Activated T-helper 2 cell treated with anti-CD3 and anti-CD28 coated beads, Interferon-gamma antibody, Interleukin-2, Interleukin-4, amounts not matched to agents 10 μg/mL and 5 μg/mL and 100 μg/mL, durations not matched to agents 14 hours and 24 hours and 36 hours (primary cell): ENCODE measurements at regions of chrX and their contacts with region 1.

Region 1: DNA sequence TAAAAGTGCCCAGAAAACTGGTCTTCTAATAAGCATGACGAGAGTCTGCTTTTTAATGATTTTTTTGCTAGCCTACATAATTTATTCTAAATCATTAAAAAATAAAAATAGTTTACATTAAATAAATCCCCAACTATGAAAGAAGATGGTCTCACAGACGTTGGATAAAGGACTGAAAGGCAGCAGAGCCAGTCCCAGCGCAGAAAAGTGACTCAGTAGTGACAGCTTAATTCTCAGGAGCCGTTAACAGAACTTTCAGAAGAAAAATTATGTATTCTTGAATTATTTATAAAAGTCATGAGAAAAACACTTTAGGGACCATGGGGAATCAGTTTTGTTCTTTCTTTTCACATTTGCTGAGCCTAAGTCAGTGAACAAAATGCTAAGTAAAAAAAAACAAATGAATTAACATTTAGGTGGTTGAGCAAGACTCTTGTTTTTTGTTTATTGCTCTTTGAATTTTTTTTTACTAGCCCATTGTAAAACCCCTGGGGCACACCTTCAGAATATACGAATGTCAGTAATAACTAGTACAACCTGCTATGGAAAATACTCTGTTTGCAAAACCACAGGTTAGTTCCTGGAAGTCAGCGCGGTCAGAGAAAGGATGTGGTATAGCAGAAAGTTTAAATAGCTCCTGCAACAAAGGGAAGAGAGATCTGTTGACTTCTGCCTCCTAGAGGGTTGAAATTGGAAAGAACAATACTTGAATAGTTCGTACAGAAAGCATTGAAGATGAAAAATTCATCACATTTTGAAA is 50.4 kb upstream of the CCDC160 start:
- DNase-seq: peak; percentile 65
- H3K4me3 Mint-ChIP-seq: peak overlapping the region; percentile 95
- H3K27ac Mint-ChIP-seq: peak overlapping the region; percentile 96
- H3K4me1 Mint-ChIP-seq: peaks cover 41% of the 10 kb centered on the region
- H3K27me3 Mint-ChIP-seq: no peaks in the 10 kb centered on the region

Region 2: GRCh38 chrX:134013092-134013497 is 173.4 kb before region 1 on chrX:
- intact Hi-C with region 1: loop called (anchors 5 kb)
- DNase-seq: no peak
- H3K4me3 Mint-ChIP-seq: no peak overlapping the region
- H3K27ac Mint-ChIP-seq: no peak overlapping the region
- H3K4me1 Mint-ChIP-seq: peaks cover 12% of the 10 kb centered on the region
- H3K27me3 Mint-ChIP-seq: peaks cover 2% of the 10 kb centered on the region

Region 3: DNA sequence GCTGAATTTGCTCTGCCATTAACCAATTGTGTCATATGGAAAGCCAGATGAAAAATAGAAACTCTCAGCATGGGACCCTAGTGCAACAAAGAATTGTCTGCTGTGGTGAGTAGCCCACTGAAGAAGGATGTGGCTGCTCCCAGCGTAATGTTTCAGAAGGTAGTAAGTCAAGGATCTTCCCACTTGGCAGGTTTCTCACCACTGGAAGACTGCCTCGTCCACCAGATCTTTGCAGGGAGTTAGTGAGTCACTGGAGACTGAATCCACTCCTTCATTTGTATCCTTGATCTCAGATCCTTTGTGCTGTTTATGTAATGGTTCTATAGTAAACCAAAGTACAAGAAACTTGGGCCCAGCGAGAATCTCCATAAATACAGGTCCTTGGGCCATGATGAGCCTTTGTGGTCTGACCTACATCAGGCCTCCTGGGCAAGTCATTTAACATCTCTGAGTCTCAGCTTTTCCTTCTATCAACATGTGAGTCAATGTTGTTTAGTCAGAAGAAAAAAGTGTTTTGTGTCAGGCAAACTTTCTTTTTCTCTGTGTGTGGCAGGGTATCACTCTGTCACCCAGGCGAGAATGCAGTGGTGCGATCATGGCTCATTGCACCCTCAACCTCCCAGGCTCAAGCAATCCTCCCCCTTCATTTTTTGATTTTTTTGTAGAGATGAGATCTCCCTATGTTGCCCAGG is 27.6 kb before region 1 on chrX:
- intact Hi-C with region 1: loop called (anchors 1 kb)
- DNase-seq: no peak
- H3K4me3 Mint-ChIP-seq: no peak overlapping the region
- H3K27ac Mint-ChIP-seq: peak overlapping the region; percentile 69
- H3K4me1 Mint-ChIP-seq: peaks cover 32% of the 10 kb centered on the region
- H3K27me3 Mint-ChIP-seq: no peaks in the 10 kb centered on the region

Region 4: DNA sequence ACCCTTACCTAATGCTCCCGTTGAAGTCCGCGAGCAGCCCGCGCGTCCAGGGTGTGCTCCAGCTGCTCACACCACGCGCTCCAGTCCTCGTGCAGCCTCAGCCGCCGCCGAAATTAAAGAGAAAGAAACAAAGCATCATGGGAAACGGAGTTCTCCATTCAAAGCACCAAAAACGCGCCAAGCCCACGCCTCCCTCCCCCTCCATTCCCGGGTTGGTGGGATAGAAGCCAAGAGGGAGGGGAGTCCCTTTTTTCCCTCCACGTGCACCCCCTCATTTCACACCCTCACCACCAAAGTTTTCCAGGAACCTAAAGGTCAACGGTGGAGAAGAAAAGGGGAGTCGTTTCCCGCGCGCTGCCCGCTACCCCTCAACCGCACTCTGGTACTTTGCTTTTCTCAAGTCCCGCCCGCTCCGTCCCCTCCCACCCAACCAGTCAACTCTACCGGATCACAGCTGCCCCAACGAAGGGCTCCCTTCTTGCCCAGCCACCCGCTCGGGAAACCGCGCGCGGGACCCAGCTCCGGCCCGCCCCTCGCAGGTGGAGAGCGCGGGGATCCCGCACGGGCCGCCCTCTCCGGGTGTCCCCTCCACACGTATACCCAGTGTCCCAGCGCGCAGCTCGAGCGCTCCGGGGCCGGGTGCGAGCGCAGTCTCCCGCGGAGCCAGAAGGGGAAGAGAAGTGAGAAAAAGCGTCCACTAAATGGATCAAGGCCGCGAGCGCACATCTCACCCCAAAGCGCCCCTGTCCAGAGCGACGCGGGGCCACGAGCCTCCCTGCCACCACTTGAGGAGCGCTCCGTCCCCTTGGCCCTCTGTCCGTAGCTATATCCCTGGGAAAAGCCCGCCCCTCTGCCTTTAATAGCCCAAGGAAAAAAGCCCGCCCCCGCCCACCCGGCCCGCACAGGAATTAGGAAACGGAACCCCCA is 14.6 kb before region 1 on chrX:
- intact Hi-C with region 1: loop called (anchors 1 kb)
- DNase-seq: peak; percentile 42
- H3K4me3 Mint-ChIP-seq: peak overlapping the region; percentile 96
- H3K27ac Mint-ChIP-seq: peak overlapping the region; percentile 97
- H3K4me1 Mint-ChIP-seq: peaks cover 31% of the 10 kb centered on the region
- H3K27me3 Mint-ChIP-seq: peaks cover 2% of the 10 kb centered on the region

Region 5: GRCh38 chrX:134251241-134251640 is 64.7 kb after region 1 on chrX:
- intact Hi-C with region 1: loop called (anchors 5 kb)
- DNase-seq: no peak
- H3K4me3 Mint-ChIP-seq: no peak overlapping the region
- H3K27ac Mint-ChIP-seq: no peak overlapping the region
- H3K4me1 Mint-ChIP-seq: peaks cover 2% of the 10 kb centered on the region
- H3K27me3 Mint-ChIP-seq: peaks cover under 1% of the 10 kb centered on the region

Region 6: DNA sequence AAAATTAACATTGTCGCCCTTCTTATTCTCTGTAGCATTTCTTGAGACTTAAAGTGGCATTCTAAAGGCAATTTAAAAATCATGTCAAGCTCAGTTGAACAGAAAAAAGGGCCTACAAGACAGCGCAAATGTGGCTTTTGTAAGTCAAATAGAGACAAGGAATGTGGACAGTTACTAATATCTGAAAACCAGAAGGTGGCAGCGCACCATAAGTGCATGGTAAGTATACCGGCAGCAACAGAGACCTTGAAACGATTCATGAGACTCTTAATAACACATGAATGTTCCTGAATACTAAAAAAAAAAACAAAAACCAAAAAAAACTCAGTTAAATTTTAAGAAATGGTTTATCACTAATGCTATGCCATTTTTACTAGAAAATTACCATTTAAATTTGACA is 191.0 kb after region 1 on chrX:
- intact Hi-C with region 1: loop called (anchors 1 kb)
- DNase-seq: no peak
- H3K4me3 Mint-ChIP-seq: no peak overlapping the region
- H3K27ac Mint-ChIP-seq: no peak overlapping the region
- H3K4me1 Mint-ChIP-seq: peaks cover 10% of the 10 kb centered on the region
- H3K27me3 Mint-ChIP-seq: no peaks in the 10 kb centered on the region